GM10248 (cell line): ENCODE measurements at regions of chr6 and their contacts with region 1.

Region 1: DNA sequence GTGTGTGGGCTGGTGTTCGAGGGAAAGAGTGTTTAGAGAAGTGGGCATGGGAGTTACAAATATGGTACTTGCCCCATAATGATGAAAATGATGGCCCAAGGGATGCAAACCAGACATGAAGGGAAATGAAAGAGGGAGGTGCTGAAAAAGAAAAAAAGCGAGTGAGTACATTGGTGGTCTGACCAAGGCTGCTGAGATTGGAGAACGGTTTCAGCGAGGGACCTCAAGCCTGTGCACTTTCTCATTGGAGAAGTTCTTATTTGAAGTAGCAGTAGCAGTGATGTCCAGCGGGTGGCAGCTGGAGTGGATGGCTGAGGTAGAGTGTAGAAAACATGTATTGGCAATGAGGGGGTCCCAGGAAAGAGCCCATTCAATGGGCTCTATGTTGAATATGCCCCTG is 54.8 kb downstream of the TNFAIP3 start:
- DNase-seq: no peak
- CTCF ChIP-seq: peak; percentile 26

Region 2: GRCh38 chr6:137910424-137910834 is 11.4 kb before region 1 on chr6:
- CTCF ChIA-PET with region 1: interaction called, 14 read pairs
- POLR2A ChIA-PET with region 1: no interaction called
- DNase-seq: no peak
- CTCF ChIP-seq: no peak